ENCODE measurements at regions of chr5 and their contacts with region 1.

Region 1: DNA sequence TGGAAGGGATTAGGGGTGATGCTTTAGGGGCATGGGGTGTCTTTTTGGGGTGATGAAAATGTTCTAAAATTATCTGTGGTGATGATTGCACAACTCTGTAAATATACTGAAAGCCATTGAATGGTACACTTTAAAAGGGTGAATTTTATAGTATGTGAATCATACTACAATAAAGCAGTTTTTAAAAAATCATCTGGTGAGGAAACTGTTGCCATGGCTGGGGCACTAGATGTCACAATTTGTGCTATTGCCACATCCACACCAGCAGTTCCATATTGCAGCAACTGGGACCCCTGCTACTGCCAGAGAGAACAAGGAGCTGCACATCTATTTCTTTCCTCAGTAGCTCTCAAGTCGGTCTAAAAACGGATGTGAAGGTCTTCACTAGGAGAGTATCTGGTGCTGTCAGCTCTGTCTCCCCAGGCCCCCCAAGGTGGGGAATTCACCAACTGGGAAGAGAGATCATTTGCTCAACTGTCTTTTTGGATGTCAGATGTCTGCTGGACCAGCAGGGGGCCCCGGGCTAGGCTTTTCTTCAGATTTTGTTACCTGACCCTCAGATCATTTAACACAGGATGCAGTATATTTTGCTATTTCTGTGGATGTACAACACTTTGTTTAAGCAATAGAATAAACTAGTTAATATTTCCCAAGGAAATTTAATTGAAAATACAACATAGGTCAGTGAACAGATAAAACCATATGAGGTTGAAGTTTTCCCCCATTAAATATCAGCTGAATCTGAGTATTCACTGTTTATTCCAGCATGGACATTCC is 13.2 kb downstream of the CMYA5 start:
- DNase-seq: peak in 2 of 3 donors; percentile 35 to 41
- H3K4me3 ChIP-seq: no peak overlapping the region
- H3K27ac ChIP-seq: no peak overlapping the region
- H3K4me1 ChIP-seq: peaks cover 0 to 5% (median 0%) of the 10 kb centered on the region in 4 experiments
- H3K27me3 ChIP-seq: no peaks in the 10 kb centered on the region

Region 2: GRCh38 chr5:79716839-79717238 is 14.0 kb after region 1 on chr5:
- CTCF ChIA-PET with region 1: interaction called, 17 read pairs
- POLR2A ChIA-PET with region 1: no interaction called
- DNase-seq: no peak
- H3K4me3 ChIP-seq: no peak overlapping the region
- H3K27ac ChIP-seq: no peak overlapping the region
- H3K4me1 ChIP-seq: no peaks in the 10 kb centered on the region
- H3K27me3 ChIP-seq: no peaks in the 10 kb centered on the region